ENCODE measurements at regions of chr17 and their contacts with region 1.

Region 1: GRCh38 chr17:38702166-38702899 is 2.7 kb upstream of the MLLT6 start:
- DNase-seq: peak; percentile 93
- H3K4me3 Mint-ChIP-seq: peak overlapping the region; percentile 90
- H3K27ac Mint-ChIP-seq: peak overlapping the region; percentile 100
- H3K4me1 Mint-ChIP-seq: peaks cover 47% of the 10 kb centered on the region
- H3K27me3 Mint-ChIP-seq: no peaks in the 10 kb centered on the region

Region 2: GRCh38 chr17:38326996-38327792 is 375.1 kb before region 1 on chr17:
- intact Hi-C with region 1: no loop called
- DNase-seq: no peak
- H3K4me3 Mint-ChIP-seq: no peak overlapping the region
- H3K27ac Mint-ChIP-seq: peak overlapping the region; percentile 1
- H3K4me1 Mint-ChIP-seq: peaks cover 4% of the 10 kb centered on the region
- H3K27me3 Mint-ChIP-seq: peaks cover 2% of the 10 kb centered on the region

Region 3: DNA sequence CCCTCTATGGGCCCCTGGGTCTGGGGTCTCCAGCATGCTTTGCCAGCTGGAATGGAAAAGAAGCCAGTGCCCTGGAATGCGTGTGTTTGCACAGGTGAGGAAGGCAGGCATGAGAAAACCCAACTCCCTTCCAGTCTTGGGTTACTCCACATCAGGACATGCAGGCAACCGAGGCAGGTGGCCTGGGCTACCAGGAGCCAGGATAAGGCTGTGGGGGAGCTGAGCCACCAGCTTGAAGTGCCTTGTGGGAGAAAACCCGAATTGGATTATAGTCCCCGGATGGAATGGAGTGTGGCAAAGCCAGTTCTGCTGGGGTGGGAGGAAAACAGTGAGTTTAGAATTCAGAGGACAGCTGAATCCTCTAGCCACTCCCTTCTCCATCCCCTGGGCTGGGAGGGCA is 103.8 kb before region 1 on chr17:
- intact Hi-C with region 1: no loop called
- DNase-seq: peak; percentile 71
- H3K4me3 Mint-ChIP-seq: no peak overlapping the region
- H3K27ac Mint-ChIP-seq: no peak overlapping the region
- H3K4me1 Mint-ChIP-seq: peaks cover 19% of the 10 kb centered on the region
- H3K27me3 Mint-ChIP-seq: peaks cover 85% of the 10 kb centered on the region

Region 4: GRCh38 chr17:38729886-38730525 is 27.7 kb after region 1 on chr17 and contains the start of gene CISD3:
- intact Hi-C with region 1: loop called (anchors 1 kb)
- DNase-seq: peak; percentile 97
- H3K4me3 Mint-ChIP-seq: peak within 1 kb of the TSS; percentile 93
- H3K27ac Mint-ChIP-seq: peak within 1 kb of the TSS; percentile 95
- H3K4me1 Mint-ChIP-seq: peaks cover 72% of the 10 kb centered on the region
- H3K27me3 Mint-ChIP-seq: no peaks in the 10 kb centered on the region
- total RNA-seq, gene CISD3: 44.0 and 46.7 TPM in 2 replicates

Region 5: DNA sequence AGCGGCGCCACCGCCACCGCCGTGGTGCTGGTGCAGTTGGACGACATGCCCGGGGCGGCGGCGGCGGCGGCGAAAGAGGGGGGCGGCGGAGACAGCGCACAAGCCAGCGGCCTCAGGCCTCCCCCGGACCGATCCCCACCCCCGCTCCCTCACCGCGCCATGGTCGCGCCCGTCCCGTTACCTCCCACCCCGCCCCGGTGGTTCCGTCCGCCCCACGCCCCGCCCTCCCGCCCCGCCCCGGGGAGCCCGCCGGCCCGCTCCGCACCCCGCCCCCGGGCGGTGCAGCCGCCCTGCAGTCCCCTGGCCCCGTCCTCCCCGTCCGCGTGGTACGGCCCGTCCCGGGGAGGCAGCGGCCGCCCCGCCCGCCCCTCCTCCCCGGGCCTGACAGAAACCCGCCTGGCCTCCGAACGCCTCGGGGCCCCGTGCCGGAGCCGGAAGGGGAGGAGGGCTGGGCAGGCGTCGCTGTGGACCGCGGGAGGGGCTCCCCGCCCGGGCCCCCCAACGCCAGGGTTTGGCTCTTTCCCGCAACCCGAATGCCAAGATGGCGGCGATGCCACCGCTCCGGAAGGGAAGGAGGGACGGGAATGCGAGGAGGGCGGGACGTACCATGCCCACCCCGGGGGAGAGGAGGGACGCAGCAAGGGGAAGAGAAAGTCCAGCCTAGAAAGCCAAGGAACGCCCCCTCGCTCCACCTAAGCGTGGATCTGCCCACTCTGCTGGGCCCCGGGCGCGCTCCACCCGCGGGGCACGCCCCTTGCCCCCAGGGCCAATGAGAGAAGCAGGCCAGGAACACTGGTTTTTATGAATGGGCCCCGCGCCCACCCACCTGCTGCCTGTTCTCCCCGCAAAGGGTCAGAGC is 97.3 kb after region 1 on chr17 and contains the start of gene PIP4K2B:
- intact Hi-C with region 1: loop called (anchors 1 kb)
- DNase-seq: peak; percentile 97
- H3K4me3 Mint-ChIP-seq: peak within 1 kb of the TSS; percentile 95
- H3K27ac Mint-ChIP-seq: peak within 1 kb of the TSS; percentile 96
- H3K4me1 Mint-ChIP-seq: peaks cover 36% of the 10 kb centered on the region
- H3K27me3 Mint-ChIP-seq: no peaks in the 10 kb centered on the region
- total RNA-seq, gene PIP4K2B: 42.8 and 44.3 TPM in 2 replicates

Region 6: GRCh38 chr17:38853292-38854219 is 151.2 kb after region 1 on chr17 and contains the start of gene RPL23:
- intact Hi-C with region 1: loop called (anchors 5 kb)
- DNase-seq: peak; percentile 97
- H3K4me3 Mint-ChIP-seq: peak within 1 kb of the TSS; percentile 91
- H3K27ac Mint-ChIP-seq: peak within 1 kb of the TSS; percentile 98
- H3K4me1 Mint-ChIP-seq: peaks cover 30% of the 10 kb centered on the region
- H3K27me3 Mint-ChIP-seq: no peaks in the 10 kb centered on the region
- total RNA-seq, gene RPL23: 1,994 and 2,005 TPM in 2 replicates

Measured in activated CD4-positive, alpha-beta T cell treated with anti-CD3 and anti-CD28 coated beads, Interleukin-2, amount 10 ng/mL, durations not matched to agents 24 days and 14 days (primary cell).